Left ventricle myocardium superior (tissue), 1 donor: ENCODE measurements at regions of chr18 and their contacts with region 1.

Region 1: DNA sequence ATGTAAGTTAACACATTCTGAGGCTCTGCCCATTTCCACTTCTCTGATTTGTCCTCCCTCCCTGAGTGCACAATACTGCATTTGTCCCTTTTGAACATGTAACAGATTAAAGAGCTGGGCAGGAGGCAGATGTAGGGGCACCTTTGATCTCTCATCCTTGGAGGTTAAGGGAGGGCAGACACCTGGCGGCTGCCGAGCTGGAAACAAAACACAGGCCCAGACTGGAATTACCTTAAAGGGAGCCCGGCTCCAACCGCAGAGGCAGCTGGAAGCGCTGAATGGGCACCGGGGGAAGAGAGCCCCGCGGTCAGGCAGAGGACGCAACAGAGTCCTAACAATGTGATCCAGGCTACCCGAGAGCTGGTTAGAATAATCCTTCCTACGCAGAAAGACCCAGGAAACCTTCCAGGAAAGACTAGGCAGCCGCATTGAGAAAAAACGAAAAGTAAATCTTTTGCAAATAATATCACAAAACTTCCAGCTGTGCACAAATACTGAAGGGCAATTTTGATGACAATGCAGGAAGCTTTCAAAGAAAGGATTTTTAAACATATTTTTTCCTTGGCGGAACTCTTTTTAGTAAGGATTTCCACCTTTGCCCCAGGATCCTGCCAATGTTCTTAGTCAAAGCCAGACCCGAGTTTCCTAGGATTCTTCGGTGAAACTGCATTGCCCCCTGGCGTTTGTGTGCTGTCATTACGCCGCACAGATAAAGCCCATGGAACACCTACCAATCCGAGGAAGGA is 216.0 kb downstream of the TGIF1 start:
- DNase-seq: peak; percentile 81
- ATAC-seq: peak; percentile 96

Region 2: GRCh38 chr18:3451183-3451988 is 214.6 kb before region 1 on chr18:
- intact Hi-C with region 1: loop called (anchors 10 kb)
- DNase-seq: peak; percentile 97
- ATAC-seq: peak; percentile 62

Region 3: DNA sequence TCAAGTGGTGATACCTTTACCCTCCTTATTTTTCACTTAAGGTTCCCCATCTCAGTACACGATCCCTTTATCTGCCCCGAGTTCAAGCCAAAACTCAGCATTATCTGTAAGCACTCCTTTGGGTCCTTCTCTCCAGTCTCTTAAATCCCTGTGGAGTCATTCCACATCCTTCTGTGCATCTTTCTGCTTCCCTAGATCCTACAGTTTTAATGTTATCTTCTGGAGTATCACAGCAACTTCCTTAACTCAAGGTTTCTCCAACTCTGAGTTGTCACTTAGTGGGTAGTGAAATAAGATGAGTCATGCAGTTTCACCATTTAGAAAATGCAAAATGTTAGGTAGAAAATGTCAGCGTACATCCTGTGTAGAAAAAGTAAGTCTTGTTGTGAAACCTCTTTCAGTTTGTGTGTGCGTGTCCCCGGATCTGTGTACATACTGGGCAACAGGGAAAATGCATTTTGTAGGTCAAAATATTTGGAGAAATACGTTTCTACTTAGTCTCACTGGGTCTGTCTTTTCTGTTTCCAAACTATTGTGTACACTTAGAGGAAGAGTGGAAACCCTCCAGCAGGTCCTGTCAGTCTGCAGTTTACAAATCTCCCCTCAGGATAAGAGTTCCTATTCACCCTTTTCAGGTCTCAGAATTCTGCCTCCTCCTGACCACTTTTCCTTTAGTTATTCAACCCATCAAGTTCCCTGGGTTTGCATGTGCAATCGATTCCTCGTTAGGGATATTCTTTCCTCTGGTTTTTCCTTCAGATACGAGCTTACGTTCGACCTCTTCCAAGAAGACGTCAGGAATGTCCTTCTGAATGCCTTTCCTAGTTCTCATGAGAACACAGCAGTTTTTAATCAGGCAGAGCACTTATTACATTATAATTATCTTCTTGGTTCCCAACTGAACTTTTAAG is 61.2 kb before region 1 on chr18:
- intact Hi-C with region 1: loop called (anchors 10 kb)
- DNase-seq: no peak
- ATAC-seq: peak; percentile 51